GM13977 (cell line): ENCODE measurements at regions of chr1 and their contacts with region 1.

Region 1: GRCh38 chr1:77126307-77126706 is 92.9 kb downstream of the PIGK start:
- DNase-seq: peak; percentile 34
- CTCF ChIP-seq: peak; percentile 74

Region 2: GRCh38 chr1:76154206-76154956 is 971.9 kb before region 1 on chr1:
- in situ Hi-C with region 1: loop called (anchors 25 kb)
- DNase-seq: peak; percentile 71
- CTCF ChIP-seq: peak; percentile 95

Region 3: GRCh38 chr1:76330991-76331603 is 795.2 kb before region 1 on chr1:
- in situ Hi-C with region 1: loop called (anchors 25 kb)
- DNase-seq: peak; percentile 30
- CTCF ChIP-seq: peak; percentile 87

Region 4: DNA sequence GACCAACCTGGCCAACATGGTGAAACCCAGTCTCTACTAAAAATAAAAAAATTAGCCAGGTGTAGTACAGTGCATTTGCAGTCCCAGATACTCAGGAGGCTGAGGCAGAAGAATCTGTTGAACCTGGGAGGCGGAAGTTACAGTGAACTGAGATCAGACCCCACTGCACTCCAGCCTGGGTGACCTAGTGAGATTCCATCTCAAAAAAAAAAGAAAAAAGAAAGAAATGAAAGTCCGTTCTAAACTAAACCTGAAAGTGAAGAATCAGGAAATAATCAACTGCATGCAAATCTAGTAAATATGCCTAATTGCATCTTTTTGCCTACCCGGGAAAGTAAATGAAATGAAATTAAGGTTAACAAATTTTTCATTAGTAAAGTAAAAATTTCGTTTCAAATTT is 456.6 kb after region 1 on chr1:
- in situ Hi-C with region 1: no loop called
- DNase-seq: no peak
- CTCF ChIP-seq: no peak